Left ventricle myocardium inferior (tissue), 1 donor: ENCODE measurements at regions of chr10 and their contacts with region 1.

Region 1: DNA sequence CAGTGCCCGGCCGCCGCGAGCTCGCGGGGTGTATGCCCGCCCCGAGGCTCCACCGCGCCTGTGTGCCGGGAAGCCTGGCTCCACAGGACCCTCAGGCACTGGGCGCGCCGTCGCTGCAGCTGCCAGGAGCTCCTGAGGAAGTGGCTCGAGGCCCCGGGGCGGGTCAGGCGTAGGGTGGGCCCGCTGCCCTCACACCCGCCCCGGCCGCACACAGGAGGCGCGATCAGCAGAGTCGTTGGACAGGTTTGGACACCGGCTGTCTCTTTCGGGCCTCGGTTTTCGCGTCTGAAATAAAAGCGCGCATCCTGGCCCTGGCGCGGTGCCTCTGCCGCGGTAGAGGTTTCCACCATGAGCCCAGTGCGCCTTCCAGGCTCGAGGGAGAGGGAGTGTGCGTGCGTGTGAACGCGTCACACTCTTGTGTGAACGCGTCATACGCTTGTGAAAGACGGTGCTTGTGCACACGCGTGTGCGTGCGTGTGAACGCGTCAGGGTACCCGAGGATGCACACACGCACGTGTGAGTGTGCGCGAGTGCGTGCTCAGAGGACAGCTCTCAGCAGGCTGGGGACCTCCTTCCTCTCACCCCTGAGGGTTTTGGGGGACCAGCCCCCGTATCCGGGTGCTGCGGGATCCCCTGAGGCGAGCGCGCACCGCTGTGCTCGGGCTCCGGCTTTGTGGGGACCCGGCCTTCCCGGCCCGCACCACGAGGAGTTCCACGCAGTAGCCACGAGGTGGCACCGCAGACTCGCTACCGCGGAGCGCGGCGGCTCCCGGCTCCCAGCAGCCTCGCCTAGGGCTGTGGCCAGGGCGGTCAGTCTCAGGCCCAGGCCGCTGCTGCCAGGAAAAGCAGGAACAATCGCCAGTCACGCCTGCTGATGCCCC is 83.8 kb downstream of the BMS1 start:
- DNase-seq: peak; percentile 80
- H3K4me3 ChIP-seq: peak overlapping the region; percentile 56
- H3K27ac ChIP-seq: no peak overlapping the region
- H3K4me1 ChIP-seq: peaks cover 24% of the 10 kb centered on the region
- H3K27me3 ChIP-seq: peaks cover 53% of the 10 kb centered on the region
- CTCF ChIP-seq: peak; percentile 91

Region 2: GRCh38 chr10:42556931-42557330 is 309.4 kb before region 1 on chr10:
- intact Hi-C with region 1: no loop called
- DNase-seq: no peak
- H3K4me3 ChIP-seq: no peak overlapping the region
- H3K27ac ChIP-seq: no peak overlapping the region
- H3K4me1 ChIP-seq: peaks cover 15% of the 10 kb centered on the region
- H3K27me3 ChIP-seq: peaks cover 5% of the 10 kb centered on the region
- CTCF ChIP-seq: no peak

Region 3: DNA sequence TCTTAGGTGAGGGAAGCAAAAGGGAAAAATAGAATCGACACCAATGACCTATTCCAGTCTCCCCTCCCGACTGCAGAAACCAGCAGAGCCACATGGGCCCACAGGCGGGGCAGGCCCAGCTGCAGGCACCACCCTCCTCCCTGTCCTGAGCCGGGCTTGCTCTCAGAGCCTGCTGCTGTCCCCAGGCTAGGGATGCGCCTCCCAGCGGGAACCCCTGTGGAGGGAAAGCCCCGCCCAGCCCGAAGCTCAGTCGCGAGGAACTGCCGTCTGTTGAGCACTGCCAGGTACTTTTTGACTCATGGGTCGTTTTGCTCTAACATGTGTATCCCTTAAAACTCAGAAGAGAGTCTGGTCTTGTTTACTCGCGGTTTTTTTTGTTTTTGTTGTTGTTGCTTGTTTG is 86.0 kb after region 1 on chr10:
- intact Hi-C with region 1: no loop called
- DNase-seq: peak; percentile 50
- H3K4me3 ChIP-seq: peak overlapping the region; percentile 43
- H3K27ac ChIP-seq: peak overlapping the region; percentile 54
- H3K4me1 ChIP-seq: peaks cover 18% of the 10 kb centered on the region
- H3K27me3 ChIP-seq: peaks cover 30% of the 10 kb centered on the region
- CTCF ChIP-seq: no peak

Region 4: DNA sequence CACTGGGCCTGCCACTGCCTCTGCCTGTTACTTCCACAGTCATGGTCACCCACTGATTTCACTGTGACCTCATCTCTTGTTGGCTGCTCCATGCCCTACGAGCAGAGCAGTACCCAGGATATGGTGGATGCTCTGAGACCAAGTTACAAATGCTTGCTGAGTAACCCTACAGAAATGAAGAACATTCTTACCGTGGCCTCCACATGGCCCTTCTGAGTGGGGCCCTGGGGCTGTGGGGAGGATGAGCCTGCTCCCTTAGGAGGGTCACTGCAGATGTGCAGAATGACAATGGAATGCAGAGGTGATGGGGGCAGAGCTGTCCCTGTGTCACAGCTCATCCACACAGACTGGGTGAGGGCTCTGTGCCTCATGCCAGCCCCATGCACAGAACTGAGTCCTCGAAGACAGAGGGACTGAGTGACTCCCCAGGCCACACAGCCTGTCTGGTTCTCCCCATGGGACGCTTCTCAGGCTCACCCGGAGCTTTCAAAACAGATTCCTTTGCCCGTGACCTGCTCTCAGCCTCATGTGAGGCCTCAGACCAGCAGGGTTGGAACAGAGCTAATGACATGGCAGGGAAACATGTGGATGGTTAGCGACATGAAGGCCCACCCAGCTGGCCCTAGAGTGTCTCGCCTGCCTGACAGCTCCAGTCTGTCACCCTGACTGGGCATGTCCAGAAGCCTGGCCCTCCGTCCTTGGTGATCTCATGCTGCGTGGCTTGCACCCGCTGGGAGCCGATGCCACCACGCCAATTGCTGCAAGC is 182.4 kb after region 1 on chr10:
- intact Hi-C with region 1: no loop called
- DNase-seq: no peak
- H3K4me3 ChIP-seq: no peak overlapping the region
- H3K27ac ChIP-seq: no peak overlapping the region
- H3K4me1 ChIP-seq: no peaks in the 10 kb centered on the region
- H3K27me3 ChIP-seq: peaks cover 26% of the 10 kb centered on the region
- CTCF ChIP-seq: no peak

Region 5: GRCh38 chr10:43105102-43105785 is 238.9 kb after region 1 on chr10:
- intact Hi-C with region 1: loop called (anchors 5 kb)
- DNase-seq: peak; percentile 77
- H3K4me3 ChIP-seq: peak overlapping the region; percentile 74
- H3K27ac ChIP-seq: peak overlapping the region; percentile 9
- H3K4me1 ChIP-seq: peaks cover 17% of the 10 kb centered on the region
- H3K27me3 ChIP-seq: peaks cover 50% of the 10 kb centered on the region
- CTCF ChIP-seq: peak; percentile 100